ENCODE measurements at regions of chr11 and their contacts with region 1.

Region 1: DNA sequence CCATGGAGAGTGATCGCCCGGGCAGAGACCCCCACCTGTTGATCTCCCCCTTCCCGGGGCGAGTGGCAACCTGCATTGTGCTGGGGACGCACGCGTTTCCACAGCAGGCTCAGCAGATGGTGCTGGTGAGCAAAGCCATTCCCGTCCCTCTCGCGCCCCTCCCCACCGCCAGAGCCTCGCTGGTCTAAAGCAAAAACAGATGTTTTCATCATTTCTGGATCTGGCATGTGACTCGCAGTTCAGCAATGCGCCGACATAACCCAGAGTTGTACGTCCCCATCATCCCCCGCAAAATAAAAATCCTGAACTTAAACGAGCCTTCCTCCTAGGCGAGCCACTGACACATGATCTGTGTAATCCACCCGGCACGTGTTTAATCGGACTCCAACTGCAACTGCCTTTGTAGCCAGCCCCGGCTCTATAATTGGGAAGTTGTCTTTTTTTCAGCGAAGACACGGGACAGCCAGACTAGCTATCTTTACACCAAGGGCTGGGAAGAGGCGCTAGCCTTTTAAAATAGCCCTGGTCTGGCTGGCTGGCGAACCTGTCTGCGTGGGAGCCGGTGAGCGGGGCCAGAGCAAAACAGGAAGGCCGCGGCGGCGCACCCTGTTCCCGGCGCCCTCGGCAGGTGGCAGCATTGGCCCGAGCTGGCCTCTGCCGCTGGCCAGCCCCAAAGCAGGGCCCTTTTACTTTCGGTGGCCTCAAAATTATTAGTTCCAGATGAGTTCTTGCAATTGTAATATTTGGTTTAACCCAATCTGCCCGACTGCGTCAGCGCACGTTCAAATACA is 203.0 kb upstream of the SORL1-AS1 start:
- DNase-seq: peak; percentile 87
- H3K4me3 ChIP-seq: peak overlapping the region; percentile 6 to 68 (median 39)
- H3K27ac ChIP-seq: peak overlapping the region; percentile 69
- H3K4me1 ChIP-seq: peaks cover 2% of the 10 kb centered on the region
- H3K27me3 ChIP-seq: peaks cover 5 to 11% of the 10 kb centered on the region in 2 experiments
- CTCF ChIP-seq: peak; percentile 84 to 98
- POLR2A ChIP-seq: no peak

Region 2: GRCh38 chr11:121636081-121636799 is 19.5 kb before region 1 on chr11:
- CTCF ChIA-PET with region 1: no interaction called
- POLR2A ChIA-PET with region 1: no interaction called
- dilution Hi-C with region 1: no loop called
- intact Hi-C with region 1: no loop called
- DNase-seq: no peak
- H3K4me3 ChIP-seq: no peak overlapping the region
- H3K27ac ChIP-seq: no peak overlapping the region
- H3K4me1 ChIP-seq: no peaks in the 10 kb centered on the region
- H3K27me3 ChIP-seq: peaks cover 0 to 6% of the 10 kb centered on the region in 2 experiments
- CTCF ChIP-seq: no peak
- POLR2A ChIP-seq: no peak

Region 3: DNA sequence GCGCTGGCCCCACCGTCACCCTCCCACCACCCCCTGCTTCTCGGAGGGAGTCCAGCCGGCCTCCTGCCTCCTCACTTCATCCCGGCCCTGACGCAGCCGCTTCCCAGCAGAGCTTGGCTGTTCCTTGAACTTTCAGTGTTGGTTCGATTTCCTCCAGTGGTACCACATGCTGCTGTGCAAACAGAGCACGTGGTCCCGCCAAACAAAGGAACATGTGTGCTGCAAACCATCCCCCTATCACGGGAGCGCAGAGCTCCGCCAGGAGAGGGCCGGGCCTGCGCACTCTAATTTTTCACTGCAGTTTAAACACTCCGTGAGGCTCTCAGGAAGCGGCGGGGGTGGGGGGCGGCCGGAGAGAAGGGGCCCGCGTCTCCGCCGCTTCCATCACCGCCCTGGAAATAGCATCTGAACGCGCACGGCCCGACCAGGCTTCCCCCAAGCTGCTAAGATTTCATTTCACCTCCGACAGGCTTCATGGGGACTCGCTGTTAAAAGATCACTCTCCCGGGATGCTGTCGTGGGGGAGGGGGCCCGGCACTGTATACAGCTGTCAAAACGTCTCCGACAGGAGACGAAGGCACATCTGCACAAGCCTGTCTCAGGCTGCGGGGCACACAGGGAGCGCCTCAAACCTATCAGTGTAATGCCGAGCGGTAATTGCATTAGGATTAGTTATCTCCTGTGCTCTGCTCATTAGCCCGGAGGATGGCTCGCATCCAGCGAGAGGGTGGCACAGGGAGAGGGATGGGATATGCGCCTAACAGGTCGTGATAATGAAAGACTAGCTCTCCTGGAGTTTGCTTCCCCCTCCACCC is 66.9 kb after region 1 on chr11:
- CTCF ChIA-PET with region 1: interaction called, 4 read pairs
- POLR2A ChIA-PET with region 1: no interaction called
- dilution Hi-C with region 1: no loop called
- intact Hi-C with region 1: loop called (anchors 1 kb)
- DNase-seq: peak; percentile 94
- H3K4me3 ChIP-seq: peak overlapping the region; percentile 21 to 59 (median 31)
- H3K27ac ChIP-seq: peak overlapping the region; percentile 59
- H3K4me1 ChIP-seq: peaks cover 25% of the 10 kb centered on the region
- H3K27me3 ChIP-seq: peaks cover 3 to 5% of the 10 kb centered on the region in 2 experiments
- CTCF ChIP-seq: no peak
- POLR2A ChIP-seq: no peak

Region 4: DNA sequence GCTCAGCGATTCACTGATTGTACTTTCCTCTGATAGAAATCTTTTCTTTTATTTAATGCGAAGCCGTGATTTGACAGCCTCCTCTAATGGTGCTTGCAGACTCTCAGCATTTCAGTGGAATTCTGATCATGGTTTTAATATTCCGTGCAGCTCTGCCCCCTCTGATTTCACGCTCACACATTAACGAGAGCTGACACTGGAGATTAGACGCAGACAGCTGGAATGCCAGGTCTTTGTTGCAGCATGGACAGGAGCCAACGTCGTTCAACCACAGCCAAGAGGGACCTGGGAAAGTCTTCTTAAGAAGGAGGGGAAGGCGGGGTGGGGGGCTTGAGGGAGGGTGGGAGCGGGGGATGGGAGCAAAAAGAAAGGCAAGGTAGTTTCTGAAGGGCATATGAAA is 273.8 kb after region 1 on chr11:
- CTCF ChIA-PET with region 1: no interaction called
- POLR2A ChIA-PET with region 1: no interaction called
- dilution Hi-C with region 1: no loop called
- intact Hi-C with region 1: loop called (anchors 5 kb)
- DNase-seq: peak; percentile 63
- H3K4me3 ChIP-seq: peak overlapping the region in 2 of 3 experiments; percentile 16 to 39
- H3K27ac ChIP-seq: no peak overlapping the region
- H3K4me1 ChIP-seq: peaks cover 8% of the 10 kb centered on the region
- H3K27me3 ChIP-seq: peaks cover 0 to 2% of the 10 kb centered on the region in 2 experiments
- CTCF ChIP-seq: no peak
- POLR2A ChIP-seq: no peak

Region 5: GRCh38 chr11:122020902-122021301 is 365.2 kb after region 1 on chr11:
- CTCF ChIA-PET with region 1: interaction called, 8 read pairs
- POLR2A ChIA-PET with region 1: no interaction called
- dilution Hi-C with region 1: no loop called
- intact Hi-C with region 1: loop called (anchors 1 kb)
- DNase-seq: peak; percentile 46
- H3K4me3 ChIP-seq: no peak overlapping the region
- H3K27ac ChIP-seq: no peak overlapping the region
- H3K4me1 ChIP-seq: no peaks in the 10 kb centered on the region
- H3K27me3 ChIP-seq: no peaks in the 10 kb centered on the region
- CTCF ChIP-seq: peak; percentile 38 to 57
- POLR2A ChIP-seq: no peak

Region 6: GRCh38 chr11:122215244-122215992 is 559.7 kb after region 1 on chr11:
- CTCF ChIA-PET with region 1: interaction called, 22 read pairs
- POLR2A ChIA-PET with region 1: no interaction called
- dilution Hi-C with region 1: no loop called
- intact Hi-C with region 1: loop called (anchors 1 kb)
- DNase-seq: peak; percentile 79
- H3K4me3 ChIP-seq: no peak overlapping the region
- H3K27ac ChIP-seq: no peak overlapping the region
- H3K4me1 ChIP-seq: peaks cover 6% of the 10 kb centered on the region
- H3K27me3 ChIP-seq: peaks cover 0 to 3% of the 10 kb centered on the region in 2 experiments
- CTCF ChIP-seq: peak; percentile 96 to 98
- POLR2A ChIP-seq: no peak

Region 7: DNA sequence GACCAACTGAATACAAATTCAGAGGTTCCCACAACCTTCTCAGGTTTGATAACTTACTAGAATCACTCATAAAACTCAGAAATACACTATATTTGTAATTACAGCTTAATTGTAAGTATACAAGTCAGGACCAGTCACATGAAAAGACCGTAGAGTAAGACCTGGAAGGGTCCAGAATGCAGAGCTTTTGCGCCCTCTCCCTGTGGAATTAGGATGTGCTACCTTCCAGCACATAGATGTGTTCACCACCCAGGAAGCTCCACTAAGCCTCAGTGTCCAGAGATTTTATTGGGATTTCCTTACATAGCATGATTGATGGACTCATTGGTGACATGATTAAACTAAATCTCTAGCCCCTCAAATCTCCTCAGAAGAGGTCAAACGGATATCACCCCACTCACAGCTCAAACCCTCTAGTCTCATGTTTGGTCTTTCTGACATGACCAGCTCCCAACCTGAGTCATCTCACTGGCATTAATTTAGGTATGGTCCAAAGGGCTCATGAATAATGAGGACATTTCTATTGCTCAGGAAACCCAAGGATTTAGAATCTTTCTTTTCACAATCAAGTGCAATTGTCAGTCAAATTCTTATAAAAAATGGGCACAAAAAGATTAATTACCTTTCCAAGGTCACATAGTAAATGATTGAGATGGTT is 922.6 kb after region 1 on chr11:
- CTCF ChIA-PET with region 1: interaction called, 3 read pairs
- POLR2A ChIA-PET with region 1: no interaction called
- dilution Hi-C with region 1: no loop called
- intact Hi-C with region 1: loop called (anchors 1 kb)
- DNase-seq: no peak
- H3K4me3 ChIP-seq: no peak overlapping the region
- H3K27ac ChIP-seq: no peak overlapping the region
- H3K4me1 ChIP-seq: no peaks in the 10 kb centered on the region
- H3K27me3 ChIP-seq: no peaks in the 10 kb centered on the region
- CTCF ChIP-seq: no peak
- POLR2A ChIP-seq: no peak

Measured in endothelial cell of umbilical vein (primary cell).